ENCODE measurements at regions of chr2 and their contacts with region 1.

Region 1: DNA sequence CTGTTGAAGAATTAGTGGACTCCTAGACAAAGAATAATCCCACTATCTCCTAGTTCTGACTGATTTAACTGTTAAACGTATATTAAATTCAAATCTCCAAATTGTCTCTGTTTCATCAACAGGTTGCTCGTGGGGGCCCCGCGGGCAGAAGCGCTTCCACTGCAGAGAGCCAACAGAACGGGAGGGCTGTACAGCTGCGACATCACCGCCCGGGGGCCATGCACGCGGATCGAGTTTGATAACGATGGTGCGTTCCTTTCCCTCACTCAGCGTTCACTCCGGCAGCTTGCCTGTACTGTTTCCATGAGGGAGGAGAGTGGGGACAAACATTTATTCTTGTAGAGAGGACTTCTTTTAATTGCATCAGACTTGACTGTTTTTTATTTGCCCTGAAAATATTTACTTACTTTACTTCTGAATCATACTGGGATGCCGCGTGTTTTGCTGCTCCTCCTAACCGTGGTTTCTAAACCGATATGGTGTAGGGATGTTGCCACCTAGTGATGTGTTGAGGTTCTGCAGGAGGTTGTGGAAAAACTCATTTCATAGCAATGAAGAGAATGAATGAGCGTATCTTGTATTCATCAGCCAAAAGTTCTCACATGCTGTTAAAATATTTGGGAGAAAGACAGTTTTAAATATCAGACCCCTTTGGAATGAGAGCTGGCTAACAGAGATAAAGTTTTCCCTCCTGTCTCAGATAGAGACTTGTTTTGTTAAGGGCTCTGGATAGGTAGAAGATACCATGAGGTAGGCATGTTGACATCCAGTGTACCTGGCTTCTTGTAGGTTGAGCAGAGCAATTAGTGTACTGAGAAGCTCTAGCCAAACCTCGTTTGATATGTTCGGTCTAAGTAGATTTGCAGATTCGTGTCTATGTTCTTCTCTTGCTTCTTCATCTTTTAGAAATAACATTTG is 38.3 kb downstream of the ITGA6 start:
- DNase-seq: peak; percentile 92
- H3K4me3 Mint-ChIP-seq: no peak overlapping the region
- H3K27ac Mint-ChIP-seq: no peak overlapping the region
- H3K4me1 Mint-ChIP-seq: peaks cover 47% of the 10 kb centered on the region
- H3K27me3 Mint-ChIP-seq: no peaks in the 10 kb centered on the region

Region 2: DNA sequence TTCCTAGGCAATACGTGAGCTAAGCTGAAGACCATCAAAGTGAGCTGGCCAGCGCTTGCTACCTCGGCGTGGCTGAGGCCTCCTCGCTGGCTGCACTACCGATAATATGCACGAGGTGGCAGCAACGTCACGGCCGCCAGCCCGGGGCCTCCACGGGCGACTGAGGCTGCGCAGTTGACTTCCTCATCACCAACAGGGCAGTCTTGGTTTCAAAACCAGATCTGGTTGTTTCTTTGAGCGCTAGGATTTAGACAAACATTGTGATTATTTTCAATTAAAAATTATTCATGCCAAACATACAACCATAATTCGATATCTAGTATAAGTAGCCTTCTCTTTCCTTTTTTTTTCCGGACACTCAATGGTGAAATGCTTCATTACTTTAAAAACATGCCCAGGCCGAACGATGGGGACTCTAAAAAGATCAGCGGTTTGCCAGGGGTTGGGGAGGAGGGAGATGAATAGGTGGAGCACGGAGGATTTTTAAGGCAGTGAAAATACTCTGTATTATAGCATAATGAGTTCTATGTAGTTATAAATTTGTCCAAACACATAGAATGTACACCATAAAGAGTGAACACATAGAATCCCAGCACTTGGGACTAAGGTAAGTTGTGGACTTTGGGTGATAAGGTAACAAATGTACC is 891.4 kb before region 1 on chr2:
- intact Hi-C with region 1: loop called (anchors 1 kb)
- DNase-seq: peak; percentile 95
- H3K4me3 Mint-ChIP-seq: no peak overlapping the region
- H3K27ac Mint-ChIP-seq: peak overlapping the region; percentile 35
- H3K4me1 Mint-ChIP-seq: peaks cover 4% of the 10 kb centered on the region
- H3K27me3 Mint-ChIP-seq: peaks cover 10% of the 10 kb centered on the region

Region 3: DNA sequence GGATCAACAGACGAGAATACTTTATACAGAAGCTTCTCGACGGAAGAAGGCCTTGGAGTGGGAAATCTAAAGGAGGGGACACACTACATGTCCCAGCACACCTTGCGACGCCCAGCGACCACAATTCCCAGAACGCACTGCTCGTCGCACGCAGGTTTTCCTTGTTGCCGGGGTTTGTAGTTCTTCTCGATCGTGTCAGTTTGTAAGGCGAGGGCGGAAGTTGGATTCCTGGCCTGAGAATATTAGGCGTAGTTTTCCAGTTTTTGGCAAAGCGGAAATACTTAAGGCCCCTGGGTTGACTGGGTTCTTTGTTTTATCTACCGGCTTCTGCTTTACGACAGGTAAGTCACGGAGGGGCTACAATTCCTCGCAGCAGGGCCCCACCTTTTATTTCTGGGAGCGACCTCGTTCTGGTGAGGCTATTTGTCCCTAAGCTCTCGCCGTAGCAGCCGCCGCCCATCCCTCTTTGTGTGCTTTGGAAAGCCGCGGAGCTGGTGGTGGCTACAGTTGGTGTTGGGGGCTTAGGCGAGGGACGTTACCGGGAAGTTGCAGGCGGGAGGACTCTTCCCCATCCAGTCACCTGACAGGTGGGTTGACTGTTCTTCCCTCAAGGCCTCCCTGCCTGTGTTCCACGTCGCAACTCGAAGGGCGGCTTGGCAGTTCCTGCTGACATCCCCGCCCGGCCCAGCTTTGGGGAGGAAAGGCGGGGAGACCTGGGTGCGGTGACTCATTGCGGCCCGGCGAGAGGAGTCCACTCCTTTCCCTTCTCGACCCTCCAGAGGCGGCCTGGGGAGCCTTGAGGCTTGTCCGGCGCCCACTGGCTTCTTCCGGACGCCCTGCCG is 778.2 kb before region 1 on chr2 and contains the start of gene DYNC1I2:
- intact Hi-C with region 1: loop called (anchors 5 kb)
- DNase-seq: peak; percentile 92
- H3K4me3 Mint-ChIP-seq: peak within 1 kb of the TSS; percentile 80
- H3K27ac Mint-ChIP-seq: peak within 1 kb of the TSS; percentile 47
- H3K4me1 Mint-ChIP-seq: peaks cover 13% of the 10 kb centered on the region
- H3K27me3 Mint-ChIP-seq: peaks cover 15% of the 10 kb centered on the region
- total RNA-seq, gene DYNC1I2: 49.7 and 55.1 TPM in 2 replicates

Region 4: GRCh38 chr2:172102391-172103278 is 363.0 kb before region 1 on chr2 and contains the start of gene DLX2:
- intact Hi-C with region 1: loop called (anchors 5 kb)
- DNase-seq: peak; percentile 87
- H3K4me3 Mint-ChIP-seq: peak within 1 kb of the TSS; percentile 85
- H3K27ac Mint-ChIP-seq: peak within 1 kb of the TSS; percentile 84
- H3K4me1 Mint-ChIP-seq: peaks cover 39% of the 10 kb centered on the region
- H3K27me3 Mint-ChIP-seq: peaks cover 76% of the 10 kb centered on the region
- total RNA-seq, gene DLX2: 0.26 TPM in 1 of 2 replicates, not detected in the other

Region 5: DNA sequence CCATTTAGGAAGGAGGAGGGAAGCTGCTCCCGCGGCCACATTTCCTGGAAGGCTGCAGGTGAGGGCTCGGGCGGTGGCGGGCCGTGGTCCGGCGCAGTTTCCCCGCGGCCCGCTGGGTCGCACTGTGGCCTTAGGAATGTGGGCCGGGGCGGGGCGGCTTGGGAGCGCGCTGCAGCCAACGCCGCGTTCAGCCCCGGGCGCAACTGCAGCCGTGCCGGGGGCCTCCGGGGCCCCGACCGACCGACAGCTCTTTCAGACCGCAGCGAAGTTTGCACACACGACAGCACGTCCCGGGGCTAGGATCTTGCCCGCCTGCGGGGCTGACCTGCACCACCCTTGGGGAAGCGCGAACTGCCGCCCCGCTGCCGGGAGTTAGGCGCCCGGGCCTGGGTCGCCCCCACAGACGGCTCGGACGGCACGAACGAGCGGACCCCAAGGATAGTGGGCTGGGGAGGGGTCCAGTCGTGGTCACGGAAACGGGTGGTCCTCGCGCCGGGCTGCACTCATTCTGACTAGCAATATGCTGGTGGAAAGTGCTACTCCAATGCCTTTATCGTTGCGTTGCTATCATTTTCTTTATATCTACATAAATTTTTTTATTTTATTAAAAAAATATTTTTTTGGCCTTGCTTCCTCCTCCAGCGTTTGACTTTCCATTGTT is 293.0 kb before region 1 on chr2:
- intact Hi-C with region 1: loop called (anchors 1 kb)
- DNase-seq: peak; percentile 88
- H3K4me3 Mint-ChIP-seq: peak overlapping the region; percentile 70
- H3K27ac Mint-ChIP-seq: no peak overlapping the region
- H3K4me1 Mint-ChIP-seq: peaks cover 3% of the 10 kb centered on the region
- H3K27me3 Mint-ChIP-seq: peaks cover 36% of the 10 kb centered on the region

Region 6: GRCh38 chr2:172339371-172340010 is 126.2 kb before region 1 on chr2:
- intact Hi-C with region 1: loop called (anchors 5 kb)
- DNase-seq: no peak
- H3K4me3 Mint-ChIP-seq: peak overlapping the region; percentile 20
- H3K27ac Mint-ChIP-seq: no peak overlapping the region
- H3K4me1 Mint-ChIP-seq: peaks cover 14% of the 10 kb centered on the region
- H3K27me3 Mint-ChIP-seq: peaks cover 2% of the 10 kb centered on the region

Region 7: GRCh38 chr2:172442072-172442895 is 23.4 kb before region 1 on chr2:
- intact Hi-C with region 1: loop called (anchors 2 kb)
- DNase-seq: peak; percentile 75
- H3K4me3 Mint-ChIP-seq: no peak overlapping the region
- H3K27ac Mint-ChIP-seq: no peak overlapping the region
- H3K4me1 Mint-ChIP-seq: peaks cover 23% of the 10 kb centered on the region
- H3K27me3 Mint-ChIP-seq: peaks cover 15% of the 10 kb centered on the region

Measured in activated CD4-positive, alpha-beta T cell treated with anti-CD3 and anti-CD28 coated beads, Interleukin-2, amount 10 ng/mL, durations not matched to agents 24 days and 14 days (primary cell).